CD4-positive, alpha-beta memory T cell (primary cell): ENCODE measurements at regions of chr11 and their contacts with region 1.

Region 1: DNA sequence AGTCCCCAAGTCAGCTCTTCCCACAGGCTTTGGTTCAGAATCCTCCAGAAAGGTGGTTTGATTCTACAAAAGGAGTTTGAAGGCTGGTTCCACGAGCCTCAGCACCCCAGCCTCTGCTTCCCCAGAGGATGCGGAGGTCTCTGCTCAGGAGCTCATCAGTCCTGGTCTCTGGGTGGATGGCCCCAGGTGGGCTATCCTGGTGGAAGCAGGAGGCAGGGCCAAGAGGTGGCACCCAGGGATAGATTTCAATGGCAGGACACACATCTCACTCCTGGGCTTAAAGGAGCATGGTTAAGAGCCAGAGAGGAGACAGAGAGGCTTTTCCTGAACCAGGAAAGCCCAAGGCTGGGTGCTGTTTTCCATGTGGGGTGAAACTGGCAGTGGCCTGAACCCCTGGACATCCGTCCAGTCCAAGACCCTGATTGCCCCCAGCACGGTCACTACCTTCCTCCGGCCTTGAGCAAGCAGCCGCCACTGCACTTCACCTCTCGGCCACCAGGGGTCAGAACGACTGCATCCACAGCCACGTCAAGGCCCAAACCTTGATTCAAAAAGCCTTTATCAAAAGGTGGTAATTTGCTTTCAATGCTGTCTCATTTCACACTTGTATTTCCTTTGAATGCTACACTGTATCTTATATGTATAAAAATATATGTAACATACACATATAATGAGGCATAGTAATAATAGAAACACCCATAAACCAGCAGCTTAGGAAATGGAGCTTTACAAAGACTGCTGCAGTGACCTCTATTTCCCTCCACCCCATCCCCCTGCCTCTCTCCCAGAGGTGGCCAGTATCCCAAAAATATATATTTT is 19.3 kb upstream of the FXYD2 start:
- DNase-seq: peak; percentile 72 to 79 (median 76)
- H3K4me3 ChIP-seq: no peak overlapping the region
- H3K4me3 Mint-ChIP-seq: no peak overlapping the region
- H3K27ac ChIP-seq: no peak overlapping the region
- H3K27ac Mint-ChIP-seq: peak overlapping the region in 2 of 7 donors; percentile 56 to 79
- H3K4me1 ChIP-seq: peaks cover 4% of the 10 kb centered on the region
- H3K4me1 Mint-ChIP-seq: peaks cover 0 to 8% (median 2%) of the 10 kb centered on the region in 4 donors
- H3K27me3 ChIP-seq: no peaks in the 10 kb centered on the region
- H3K27me3 Mint-ChIP-seq: no peaks in the 10 kb centered on the region

Region 2: DNA sequence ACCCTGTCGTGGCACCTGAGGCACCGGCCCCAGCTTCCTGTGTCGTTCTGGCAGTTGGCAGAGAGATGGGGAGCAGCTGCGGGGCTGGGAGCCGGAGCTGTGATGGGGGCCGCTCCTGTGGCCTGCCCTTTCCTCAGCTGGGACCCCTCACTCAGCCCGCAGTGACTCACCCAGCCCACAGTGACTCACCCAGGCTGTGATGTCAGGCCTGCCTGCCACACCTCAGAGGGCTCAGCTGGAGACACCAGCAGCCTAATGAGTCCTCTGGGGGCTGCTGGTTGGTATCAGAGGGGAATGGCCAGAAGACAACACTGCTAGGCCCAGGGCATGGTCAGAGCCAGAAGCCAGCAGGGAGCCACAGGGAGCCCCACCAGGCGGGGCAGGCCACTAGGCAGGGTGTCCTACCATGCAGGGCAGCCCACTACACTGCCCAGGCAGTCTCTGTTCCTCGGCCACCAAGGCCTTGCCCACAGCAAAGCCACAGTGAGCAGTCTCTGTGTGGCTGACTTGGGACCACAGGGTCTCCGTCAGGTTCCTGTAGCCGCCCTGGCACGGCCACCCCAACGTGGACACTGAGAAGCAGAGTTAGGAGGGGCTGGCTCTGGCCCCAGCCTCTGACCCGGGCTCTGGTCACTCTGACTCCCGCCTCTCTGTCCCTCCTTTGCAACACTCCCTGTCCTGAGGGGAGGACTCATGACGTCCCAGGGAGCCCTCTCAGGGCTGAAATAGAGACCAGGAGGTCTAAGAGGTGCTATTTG is 15.1 kb before region 1 on chr11:
- CTCF ChIA-PET with region 1: interaction called, 19 read pairs
- POLR2A ChIA-PET with region 1: interaction called, 3 read pairs
- intact Hi-C with region 1: no loop called
- DNase-seq: peak; percentile 49 to 91 (median 59)
- H3K4me3 ChIP-seq: no peak overlapping the region
- H3K4me3 Mint-ChIP-seq: peak overlapping the region in 4 of 8 donors; percentile 24 to 65 (median 44)
- H3K27ac ChIP-seq: peak overlapping the region; percentile 44
- H3K27ac Mint-ChIP-seq: peak overlapping the region; percentile 65 to 87 (median 79)
- H3K4me1 ChIP-seq: peaks cover 40% of the 10 kb centered on the region
- H3K4me1 Mint-ChIP-seq: peaks cover 19 to 69% (median 40%) of the 10 kb centered on the region in 4 donors
- H3K27me3 ChIP-seq: no peaks in the 10 kb centered on the region
- H3K27me3 Mint-ChIP-seq: no peaks in the 10 kb centered on the region

Region 3: GRCh38 chr11:118002541-118003423 is 158.9 kb after region 1 on chr11:
- CTCF ChIA-PET with region 1: interaction called, 3 read pairs
- POLR2A ChIA-PET with region 1: interaction called, 6 read pairs
- intact Hi-C with region 1: loop called (anchors 5 kb)
- DNase-seq: peak; percentile 26 to 68 (median 32)
- H3K4me3 ChIP-seq: peak overlapping the region; percentile 5 to 14
- H3K4me3 Mint-ChIP-seq: peak overlapping the region; percentile 56 to 82 (median 70)
- H3K27ac ChIP-seq: peak overlapping the region; percentile 53
- H3K27ac Mint-ChIP-seq: peak overlapping the region; percentile 86 to 96 (median 91)
- H3K4me1 ChIP-seq: peaks cover 100% of the 10 kb centered on the region
- H3K4me1 Mint-ChIP-seq: peaks cover 76 to 100% (median 95%) of the 10 kb centered on the region in 4 donors
- H3K27me3 ChIP-seq: no peaks in the 10 kb centered on the region
- H3K27me3 Mint-ChIP-seq: no peaks in the 10 kb centered on the region